Cardiac septum (tissue), 1 donor: ENCODE measurements at regions of chr11 and their contacts with region 1.

Region 1: GRCh38 chr11:128422576-128423370 is 164.6 kb downstream of the ETS1 start:
- DNase-seq: no peak

Region 2: DNA sequence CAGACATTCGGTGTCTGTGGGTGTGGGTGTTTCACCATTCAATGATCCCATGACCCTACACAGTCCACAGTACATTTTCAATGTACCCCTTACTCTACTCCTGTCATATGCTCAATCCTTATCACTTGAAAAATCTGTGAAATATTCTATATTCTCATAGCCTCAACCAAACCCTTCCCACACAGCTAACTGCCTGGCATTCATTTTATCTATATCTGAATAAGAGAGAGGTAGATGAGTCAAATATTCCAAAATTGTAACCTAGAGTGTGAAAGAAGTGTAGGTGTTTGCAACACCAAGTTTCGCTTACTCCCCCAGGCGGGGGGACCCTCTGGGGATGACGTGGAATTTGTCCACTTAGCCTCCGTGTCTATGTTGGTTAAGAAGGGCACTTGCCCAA is 190.2 kb before region 1 on chr11:
- intact Hi-C with region 1: no loop called
- DNase-seq: no peak

Region 3: GRCh38 chr11:128342511-128343134 is 80.2 kb before region 1 on chr11:
- intact Hi-C with region 1: loop called (anchors 5 kb)
- DNase-seq: no peak

Region 4: GRCh38 chr11:128548655-128549255 is 126.0 kb after region 1 on chr11:
- intact Hi-C with region 1: no loop called
- DNase-seq: peak; percentile 82